ENCODE measurements at regions of chr15 and their contacts with region 1.

Region 1: DNA sequence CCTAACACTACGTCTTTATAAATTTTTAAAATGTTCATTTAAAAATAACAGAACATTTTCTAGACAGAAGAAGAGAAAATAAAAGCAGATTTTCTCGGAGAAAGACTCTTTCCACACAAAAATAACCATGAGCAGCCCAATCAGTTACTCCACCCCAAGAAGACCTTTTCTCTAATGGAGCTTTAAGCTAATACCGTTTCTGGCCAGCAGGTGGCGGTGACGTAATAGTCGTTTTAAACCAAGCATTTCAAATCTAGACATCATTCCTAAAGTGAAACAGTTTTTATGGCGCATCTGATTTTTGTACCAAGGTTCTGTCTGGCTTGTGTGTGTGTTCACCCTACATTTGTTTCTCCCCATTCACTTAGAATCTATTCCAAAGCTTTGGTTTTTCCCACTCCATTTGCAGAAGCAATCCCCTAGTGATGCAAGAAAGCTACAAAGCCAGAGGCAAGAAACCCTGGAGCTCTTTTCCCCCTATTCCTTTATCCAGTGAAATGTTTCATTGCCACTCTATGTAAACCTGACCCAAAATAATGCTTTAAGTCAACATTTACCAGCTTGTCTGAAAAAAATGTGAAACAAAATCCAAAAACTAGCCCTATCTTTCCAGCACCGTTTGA is 336.7 kb upstream of the IGF1R start:
- DNase-seq: peak; percentile 62 to 71
- ATAC-seq: peak in 1 of 4 donors; percentile 39
- H3K4me3 ChIP-seq: no peak overlapping the region
- H3K27ac ChIP-seq: no peak overlapping the region
- H3K4me1 ChIP-seq: no peaks in the 10 kb centered on the region
- H3K27me3 ChIP-seq: peaks cover 0 to 4% (median 2%) of the 10 kb centered on the region in 3 donors
- CTCF ChIP-seq: peak; percentile 72

Region 2: GRCh38 chr15:98103570-98103969 is 208.1 kb before region 1 on chr15:
- intact Hi-C with region 1: no loop called
- DNase-seq: no peak
- ATAC-seq: no peak
- H3K4me3 ChIP-seq: no peak overlapping the region
- H3K27ac ChIP-seq: no peak overlapping the region
- H3K4me1 ChIP-seq: no peaks in the 10 kb centered on the region
- H3K27me3 ChIP-seq: no peaks in the 10 kb centered on the region
- CTCF ChIP-seq: no peak

Region 3: DNA sequence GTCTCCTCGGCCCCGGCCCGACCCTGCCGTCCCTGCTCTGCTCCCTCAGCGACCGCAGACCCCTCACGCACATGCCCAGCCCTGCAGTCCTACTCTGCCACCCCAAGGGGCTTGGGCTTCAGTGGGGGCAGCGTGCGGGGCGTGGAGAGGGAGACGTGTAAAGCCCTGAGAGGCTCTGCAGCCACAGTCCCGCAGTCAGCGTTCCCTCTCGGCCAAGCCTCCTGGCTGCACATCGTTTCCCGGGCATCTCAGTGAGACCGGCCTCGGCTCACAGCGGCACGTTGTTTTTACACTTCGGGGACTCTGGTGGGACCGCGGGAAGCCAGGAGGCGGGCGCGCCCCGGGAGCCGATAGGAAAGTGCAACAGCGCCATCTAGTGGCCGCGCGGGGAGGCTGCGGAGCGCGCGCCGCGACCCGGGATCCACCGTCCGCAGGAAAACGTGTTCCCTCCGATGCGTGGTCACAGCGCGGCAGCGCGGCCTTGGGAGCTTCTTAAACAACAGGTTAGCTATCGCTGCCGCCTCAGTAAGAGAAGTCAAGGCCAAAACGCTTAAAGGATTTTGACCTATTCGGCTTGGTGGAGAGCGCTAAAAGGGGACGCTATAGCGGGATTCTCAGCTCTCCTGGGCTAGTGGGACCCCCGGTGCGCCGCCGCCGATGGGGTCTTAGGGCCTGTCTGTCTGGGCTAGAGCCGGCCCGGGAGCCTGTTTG is 109.9 kb after region 1 on chr15:
- intact Hi-C with region 1: loop called (anchors 2 to 5 kb)
- DNase-seq: peak; percentile 73 to 84
- ATAC-seq: peak; percentile 70 to 91 (median 78)
- H3K4me3 ChIP-seq: peak overlapping the region; percentile 44
- H3K27ac ChIP-seq: no peak overlapping the region
- H3K4me1 ChIP-seq: peaks cover 7% of the 10 kb centered on the region
- H3K27me3 ChIP-seq: peaks cover 0 to 42% (median 8%) of the 10 kb centered on the region in 3 donors
- CTCF ChIP-seq: peak; percentile 99

Region 4: DNA sequence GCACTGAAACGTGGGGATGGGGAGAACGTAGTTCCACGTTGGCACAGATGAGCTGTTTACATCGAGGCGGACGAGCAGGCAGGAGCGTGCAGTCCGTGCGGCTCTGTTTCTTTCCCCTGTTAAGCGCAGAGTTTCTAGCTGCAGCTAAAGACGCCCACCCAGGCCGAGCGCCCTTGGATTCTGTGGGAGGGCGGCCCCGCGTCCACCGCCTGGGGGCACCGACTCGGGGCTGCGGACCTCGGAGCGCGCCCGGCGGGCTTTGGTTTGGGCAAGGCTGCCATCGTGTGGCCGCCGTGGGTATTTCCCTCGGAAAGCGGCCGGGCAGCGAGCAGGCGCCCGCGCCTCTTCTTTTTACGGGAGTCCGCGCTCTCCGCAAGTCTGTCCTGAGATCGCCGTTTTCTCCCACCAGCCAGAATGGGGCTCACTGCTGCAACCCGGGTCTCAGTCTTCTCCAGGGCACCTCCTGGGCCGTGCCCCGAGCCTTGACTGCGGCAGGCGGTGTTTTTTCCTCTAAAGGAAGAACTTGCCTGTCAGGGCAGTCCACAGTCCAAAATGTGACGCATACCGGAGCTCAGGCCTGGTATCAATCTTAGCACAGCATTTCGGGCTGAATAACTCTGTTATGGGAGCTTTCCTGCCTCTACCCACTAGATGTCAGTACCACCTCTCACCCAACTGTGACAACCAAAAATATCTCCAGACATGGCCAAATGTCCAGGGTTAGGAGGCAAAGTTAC is 116.7 kb after region 1 on chr15:
- intact Hi-C with region 1: loop called (anchors 2 to 5 kb)
- DNase-seq: peak; percentile 72 to 83
- ATAC-seq: peak; percentile 66 to 90 (median 82)
- H3K4me3 ChIP-seq: peak overlapping the region; percentile 58
- H3K27ac ChIP-seq: no peak overlapping the region
- H3K4me1 ChIP-seq: no peaks in the 10 kb centered on the region
- H3K27me3 ChIP-seq: peaks cover 0 to 62% (median 8%) of the 10 kb centered on the region in 3 donors
- CTCF ChIP-seq: peak; percentile 76